Activated CD4-positive, alpha-beta T cell treated with anti-CD3 and anti-CD28 coated beads, Interleukin-2, amount 10 ng/mL, durations not matched to agents 7 days and 5 days (primary cell): ENCODE measurements at regions of chr12 and their contacts with region 1.

Region 1: GRCh38 chr12:6554168-6555017 is 1.4 kb downstream of the IFFO1 start:
- DNase-seq: peak; percentile 77
- H3K4me3 Mint-ChIP-seq: peak overlapping the region; percentile 84
- H3K27ac Mint-ChIP-seq: peak overlapping the region; percentile 9
- H3K4me1 Mint-ChIP-seq: peaks cover 62% of the 10 kb centered on the region
- H3K27me3 Mint-ChIP-seq: no peaks in the 10 kb centered on the region

Region 2: GRCh38 chr12:6540181-6540877 is 14.1 kb before region 1 on chr12:
- CTCF ChIA-PET with region 1: interaction called, 135 read pairs
- POLR2A ChIA-PET with region 1: interaction called, 4 read pairs
- DNase-seq: peak; percentile 63
- H3K4me3 Mint-ChIP-seq: peak overlapping the region; percentile 60
- H3K27ac Mint-ChIP-seq: peak overlapping the region; percentile 83
- H3K4me1 Mint-ChIP-seq: peaks cover 68% of the 10 kb centered on the region
- H3K27me3 Mint-ChIP-seq: no peaks in the 10 kb centered on the region